ENCODE measurements at regions of chr16 and their contacts with region 1.

Region 1: DNA sequence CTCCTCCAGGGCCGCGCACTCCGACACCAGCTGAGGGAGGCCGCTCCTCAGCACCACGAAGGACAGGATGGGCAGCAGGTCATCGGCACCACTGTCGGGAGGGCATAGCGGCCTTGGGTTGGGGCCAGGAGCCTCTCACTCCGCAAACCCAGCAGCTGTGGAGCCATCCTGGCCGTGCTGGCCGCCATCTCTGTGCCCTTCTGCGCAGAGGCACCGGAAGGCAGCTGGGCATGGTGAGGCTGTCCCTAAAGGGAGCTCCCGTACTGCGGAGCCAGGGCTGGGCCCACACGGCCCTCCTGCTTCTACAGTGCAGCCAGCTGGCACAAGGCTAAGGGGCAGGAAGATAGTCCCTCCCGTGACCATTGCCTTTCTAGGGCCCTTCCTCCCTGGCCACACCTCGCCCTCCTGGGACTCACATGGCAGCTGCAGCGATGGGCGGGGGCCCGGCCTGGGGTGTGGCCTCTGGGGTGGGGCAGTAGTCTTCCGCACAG is 7.0 kb upstream of the SPATA2L start:
- DNase-seq: no peak
- H3K4me3 ChIP-seq: no peak overlapping the region
- H3K27ac ChIP-seq: no peak overlapping the region
- H3K4me1 ChIP-seq: no peaks in the 10 kb centered on the region
- H3K27me3 ChIP-seq: no peaks in the 10 kb centered on the region
- CTCF ChIP-seq: no peak
- POLR2A ChIP-seq: no peak

Region 2: GRCh38 chr16:89641458-89642119 is 66.9 kb before region 1 on chr16:
- intact Hi-C with region 1: no loop called
- DNase-seq: no peak
- H3K4me3 ChIP-seq: no peak overlapping the region
- H3K27ac ChIP-seq: no peak overlapping the region
- H3K4me1 ChIP-seq: no peaks in the 10 kb centered on the region
- H3K27me3 ChIP-seq: no peaks in the 10 kb centered on the region
- CTCF ChIP-seq: no peak
- POLR2A ChIP-seq: no peak

Region 3: DNA sequence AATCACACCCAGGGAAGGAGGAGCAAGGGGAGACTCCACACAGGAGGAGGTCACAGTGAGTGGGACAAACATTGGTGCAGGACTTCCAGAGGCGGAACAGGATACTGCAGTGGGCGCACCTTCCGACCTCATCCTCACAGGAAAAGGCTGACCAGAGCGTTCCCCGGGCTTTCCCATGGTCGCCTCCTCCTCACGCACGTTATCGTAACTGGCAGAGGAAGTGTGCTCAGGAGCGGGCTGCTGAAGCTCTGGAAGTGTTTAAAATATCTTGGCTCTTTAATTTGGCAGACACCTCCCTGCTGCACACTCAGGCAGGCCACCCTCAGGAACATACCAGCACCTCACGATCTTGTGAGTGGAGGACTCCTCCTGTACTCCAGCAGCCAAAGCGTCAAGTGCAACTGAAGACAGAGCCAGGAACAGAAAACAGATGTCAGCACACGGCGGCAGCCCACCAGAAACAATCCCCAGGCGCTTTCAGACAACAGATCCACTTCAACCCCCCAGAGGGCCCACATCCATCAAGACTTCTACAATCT is 90.4 kb after region 1 on chr16:
- intact Hi-C with region 1: loop called (anchors 5 kb)
- DNase-seq: no peak
- H3K4me3 ChIP-seq: no peak overlapping the region
- H3K27ac ChIP-seq: no peak overlapping the region
- H3K4me1 ChIP-seq: no peaks in the 10 kb centered on the region
- H3K27me3 ChIP-seq: no peaks in the 10 kb centered on the region
- CTCF ChIP-seq: no peak
- POLR2A ChIP-seq: no peak

Measured in prostate gland (tissue), 2 donors.